Caco-2 (cell line): ENCODE measurements at regions of chr3 and their contacts with region 1.

Region 1: GRCh38 chr3:98240131-98240530 is 23.9 kb upstream of the OR5H6 start:
- DNase-seq: no peak
- H3K4me3 ChIP-seq: no peak overlapping the region
- H3K4me3 Mint-ChIP-seq: no peak overlapping the region
- H3K27ac Mint-ChIP-seq: no peak overlapping the region
- H3K4me1 ChIP-seq: no peaks in the 10 kb centered on the region
- H3K4me1 Mint-ChIP-seq: no peaks in the 10 kb centered on the region
- H3K27me3 ChIP-seq: no peaks in the 10 kb centered on the region
- H3K27me3 Mint-ChIP-seq: no peaks in the 10 kb centered on the region
- CTCF ChIP-seq: no peak

Region 2: GRCh38 chr3:98274914-98275313 is 34.8 kb after region 1 on chr3:
- CTCF ChIA-PET with region 1: no interaction called
- POLR2A ChIA-PET with region 1: no interaction called
- intact Hi-C with region 1: no loop called
- DNase-seq: no peak
- H3K4me3 ChIP-seq: no peak overlapping the region
- H3K4me3 Mint-ChIP-seq: no peak overlapping the region
- H3K27ac Mint-ChIP-seq: no peak overlapping the region
- H3K4me1 ChIP-seq: no peaks in the 10 kb centered on the region
- H3K4me1 Mint-ChIP-seq: no peaks in the 10 kb centered on the region
- H3K27me3 ChIP-seq: no peaks in the 10 kb centered on the region
- H3K27me3 Mint-ChIP-seq: no peaks in the 10 kb centered on the region
- CTCF ChIP-seq: no peak

Region 3: GRCh38 chr3:98329392-98330124 is 89.4 kb after region 1 on chr3:
- CTCF ChIA-PET with region 1: no interaction called
- POLR2A ChIA-PET with region 1: no interaction called
- intact Hi-C with region 1: loop called (anchors 10 kb)
- DNase-seq: peak; percentile 38 to 56
- H3K4me3 ChIP-seq: no peak overlapping the region
- H3K4me3 Mint-ChIP-seq: no peak overlapping the region
- H3K27ac Mint-ChIP-seq: no peak overlapping the region
- H3K4me1 ChIP-seq: no peaks in the 10 kb centered on the region
- H3K4me1 Mint-ChIP-seq: peaks cover 13% of the 10 kb centered on the region
- H3K27me3 ChIP-seq: no peaks in the 10 kb centered on the region
- H3K27me3 Mint-ChIP-seq: peaks cover 3% of the 10 kb centered on the region
- CTCF ChIP-seq: peak; percentile 63 to 69